Mammary epithelial cell (primary cell): ENCODE measurements at regions of chr5 and their contacts with region 1.

Region 1: GRCh38 chr5:126354012-126354857 is 69.0 kb upstream of the GRAMD2B start:
- DNase-seq: peak; percentile 93
- H3K4me3 ChIP-seq: peak overlapping the region; percentile 10 to 29 (median 24)
- H3K27ac ChIP-seq: peak overlapping the region; percentile 99
- H3K4me1 ChIP-seq: peaks cover 35% of the 10 kb centered on the region
- H3K27me3 ChIP-seq: no peaks in the 10 kb centered on the region
- CTCF ChIP-seq: peak; percentile 48 to 59

Region 2: GRCh38 chr5:126422989-126423788 is 69.0 kb after region 1 on chr5 and contains the start of gene GRAMD2B:
- CTCF ChIA-PET with region 1: no interaction called
- dilution Hi-C with region 1: no loop called
- in situ Hi-C with region 1: no loop called
- intact Hi-C with region 1: loop called (anchors 1 kb)
- DNase-seq: peak; percentile 97
- H3K4me3 ChIP-seq: peak within 1 kb of the TSS; percentile 73 to 92 (median 82)
- H3K27ac ChIP-seq: peak within 1 kb of the TSS; percentile 93
- H3K4me1 ChIP-seq: peaks cover 17% of the 10 kb centered on the region
- H3K27me3 ChIP-seq: no peaks in the 10 kb centered on the region
- CTCF ChIP-seq: no peak
- total RNA-seq, gene GRAMD2B: 56.2 to 113 TPM

Region 3: DNA sequence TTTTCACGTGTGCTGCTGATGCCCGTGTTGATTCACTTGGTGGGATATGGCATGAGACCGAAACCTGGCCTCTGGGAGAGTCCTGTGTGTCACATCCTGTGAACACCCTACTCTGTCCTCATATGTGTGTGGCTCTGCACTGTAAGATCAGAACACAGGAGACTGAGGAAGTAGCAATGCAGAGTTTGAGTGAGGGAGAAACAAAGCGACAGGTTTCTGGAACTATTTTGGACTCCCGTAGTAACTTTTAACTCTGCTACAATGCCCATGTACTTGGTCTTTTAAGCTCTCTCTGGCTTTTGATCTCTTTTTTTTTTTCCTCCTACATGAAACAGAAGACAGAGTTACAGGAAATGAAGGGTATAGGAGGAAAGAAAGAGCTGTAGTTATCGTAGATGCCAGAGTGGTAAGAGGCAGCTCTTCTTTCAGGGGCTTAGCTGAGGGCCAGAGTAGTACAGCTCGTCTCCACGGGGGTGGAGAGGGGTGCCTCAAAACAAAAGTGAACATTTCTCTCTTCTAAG is 95.6 kb after region 1 on chr5:
- CTCF ChIA-PET with region 1: no interaction called
- dilution Hi-C with region 1: no loop called
- in situ Hi-C with region 1: loop called in 1 of 2 experiments (anchors 25 kb)
- intact Hi-C with region 1: loop called (anchors 1 kb)
- DNase-seq: peak; percentile 98
- H3K4me3 ChIP-seq: peak overlapping the region in 2 of 3 experiments; percentile 8 to 12
- H3K27ac ChIP-seq: peak overlapping the region; percentile 99
- H3K4me1 ChIP-seq: peaks cover 68% of the 10 kb centered on the region
- H3K27me3 ChIP-seq: no peaks in the 10 kb centered on the region
- CTCF ChIP-seq: no peak

Region 4: DNA sequence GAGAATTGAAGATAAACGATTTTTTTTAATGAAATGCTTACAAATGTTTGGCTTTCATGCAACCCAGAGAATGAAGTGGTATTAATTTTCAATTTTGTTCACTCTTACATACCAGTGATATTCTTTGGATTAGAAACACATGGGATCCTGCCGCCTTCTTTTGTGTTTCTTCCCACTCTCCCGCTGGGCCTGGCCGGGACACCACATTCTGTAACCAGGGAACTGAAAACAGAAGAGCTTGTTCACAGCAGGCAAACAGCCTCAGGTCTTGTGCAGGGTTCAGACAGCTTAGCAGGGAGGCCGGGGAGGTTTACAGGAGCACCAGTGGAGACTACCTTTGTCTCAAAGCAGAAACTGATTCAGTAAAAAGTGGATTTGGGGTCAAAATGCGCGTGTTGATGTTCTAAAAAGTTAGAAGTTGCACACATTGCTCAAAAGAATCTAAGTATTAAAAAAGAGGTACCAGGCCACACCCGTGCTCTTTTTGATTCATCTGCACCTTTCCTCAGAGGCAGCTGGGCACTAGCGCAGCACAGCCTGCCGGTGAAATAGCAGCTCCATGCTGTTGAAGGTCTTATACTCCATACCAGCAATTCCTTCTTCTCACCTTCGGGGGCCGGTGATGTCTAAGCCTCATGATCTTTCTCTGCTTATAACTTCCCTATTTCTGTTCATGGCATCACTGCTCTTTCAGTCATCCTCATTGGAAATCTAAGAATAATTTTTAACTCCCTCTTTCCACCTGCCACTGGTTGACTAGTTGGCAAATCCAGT is 136.1 kb after region 1 on chr5:
- CTCF ChIA-PET with region 1: interaction called, 17 read pairs
- dilution Hi-C with region 1: no loop called
- in situ Hi-C with region 1: no loop called
- intact Hi-C with region 1: loop called (anchors 2 kb)
- DNase-seq: no peak
- H3K4me3 ChIP-seq: no peak overlapping the region
- H3K27ac ChIP-seq: peak overlapping the region; percentile 15
- H3K4me1 ChIP-seq: peaks cover 2% of the 10 kb centered on the region
- H3K27me3 ChIP-seq: no peaks in the 10 kb centered on the region
- CTCF ChIP-seq: peak; percentile 33 to 49

Region 5: DNA sequence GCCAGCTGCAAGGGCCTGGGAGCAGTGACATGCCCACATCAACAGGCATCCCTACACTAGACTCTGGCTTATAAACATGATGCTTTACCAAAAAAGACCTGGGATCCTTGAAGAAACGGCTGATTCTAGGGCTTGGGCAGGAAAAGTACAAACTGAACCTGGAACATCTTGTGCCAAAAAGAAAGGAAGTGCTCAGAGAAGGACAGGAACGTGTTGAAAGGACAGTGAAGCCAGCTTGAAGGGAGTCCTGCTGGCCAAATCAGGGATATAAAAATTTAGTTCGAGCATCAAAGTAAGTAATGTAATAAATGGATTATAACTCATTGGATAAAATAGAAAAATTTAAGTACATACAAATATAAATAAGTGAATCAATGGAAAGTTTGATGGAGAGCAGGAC is 182.6 kb after region 1 on chr5:
- CTCF ChIA-PET with region 1: no interaction called
- dilution Hi-C with region 1: loop called (anchors 5 kb)
- in situ Hi-C with region 1: loop called in 1 of 2 experiments (anchors 5 kb)
- intact Hi-C with region 1: loop called (anchors 1 kb)
- DNase-seq: no peak
- H3K4me3 ChIP-seq: no peak overlapping the region
- H3K27ac ChIP-seq: no peak overlapping the region
- H3K4me1 ChIP-seq: peaks cover 14% of the 10 kb centered on the region
- H3K27me3 ChIP-seq: no peaks in the 10 kb centered on the region
- CTCF ChIP-seq: peak; percentile 11 to 18

Region 6: DNA sequence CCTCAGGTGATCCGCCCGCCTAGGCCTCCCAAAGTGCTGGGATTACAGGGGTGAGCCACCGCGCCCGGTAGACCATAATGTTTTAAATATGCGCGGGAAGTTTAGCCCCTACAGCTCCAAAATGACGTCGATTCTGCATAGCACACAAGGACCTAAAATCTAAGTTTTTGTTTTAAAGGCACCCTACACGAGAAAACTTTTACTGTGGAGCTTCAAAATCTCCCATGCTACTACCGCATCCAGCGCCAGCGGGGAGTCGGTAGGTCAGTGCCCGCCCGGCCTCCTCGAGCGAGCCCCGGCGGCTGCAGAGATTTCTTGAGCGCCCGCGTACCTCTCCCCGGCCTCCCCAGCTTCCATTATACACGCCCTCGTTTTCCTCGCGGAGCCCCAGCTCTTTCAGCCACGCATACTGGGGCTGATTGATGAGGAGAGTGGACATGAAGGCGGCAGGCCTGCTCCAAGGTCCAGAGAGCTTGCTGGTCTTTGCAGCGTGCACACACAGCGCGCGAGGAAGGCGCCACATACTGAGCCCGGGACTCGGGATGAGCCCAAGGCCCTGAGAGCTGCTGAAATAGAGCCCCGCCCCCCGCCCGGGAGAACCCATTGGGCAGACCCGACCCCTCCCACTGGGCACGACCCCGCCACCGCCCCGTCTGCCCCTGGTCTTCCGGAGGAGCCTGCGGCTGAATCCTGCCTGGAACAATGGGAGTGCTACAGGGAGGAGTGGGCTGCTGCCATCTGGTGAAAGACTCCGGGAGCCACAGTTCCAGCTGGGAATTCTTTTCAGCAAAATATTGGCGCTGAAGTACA is 240.6 kb after region 1 on chr5 and contains the start of gene ALDH7A1:
- CTCF ChIA-PET with region 1: no interaction called
- dilution Hi-C with region 1: no loop called
- in situ Hi-C with region 1: no loop called
- intact Hi-C with region 1: loop called (anchors 1 kb)
- DNase-seq: peak; percentile 76
- H3K4me3 ChIP-seq: peak within 1 kb of the TSS; percentile 67 to 78 (median 74)
- H3K27ac ChIP-seq: peak within 1 kb of the TSS; percentile 74
- H3K4me1 ChIP-seq: peaks cover 31% of the 10 kb centered on the region
- H3K27me3 ChIP-seq: no peaks in the 10 kb centered on the region
- CTCF ChIP-seq: peak; percentile 28 to 59
- total RNA-seq, gene ALDH7A1: 48.2 to 137 TPM

Region 7: GRCh38 chr5:127117657-127118056 is 763.4 kb after region 1 on chr5:
- CTCF ChIA-PET with region 1: no interaction called
- dilution Hi-C with region 1: no loop called
- in situ Hi-C with region 1: no loop called
- intact Hi-C with region 1: no loop called
- DNase-seq: no peak
- H3K4me3 ChIP-seq: no peak overlapping the region
- H3K27ac ChIP-seq: no peak overlapping the region
- H3K4me1 ChIP-seq: no peaks in the 10 kb centered on the region
- H3K27me3 ChIP-seq: no peaks in the 10 kb centered on the region
- CTCF ChIP-seq: no peak